CD8-positive, alpha-beta T cell (primary cell): ENCODE measurements at regions of chr20 and their contacts with region 1.

Region 1: GRCh38 chr20:33992923-33993575 is 662 bp upstream of the RALY start:
- DNase-seq: peak; percentile 98 to 100 (median 99)
- ATAC-seq: peak; percentile 84
- H3K4me3 ChIP-seq: peak overlapping the region; percentile 97 to 98
- H3K4me3 Mint-ChIP-seq: peak overlapping the region; percentile 98
- H3K27ac ChIP-seq: peak overlapping the region; percentile 86 to 94
- H3K27ac Mint-ChIP-seq: peak overlapping the region; percentile 98
- H3K4me1 ChIP-seq: peaks cover 41% of the 10 kb centered on the region
- H3K4me1 Mint-ChIP-seq: peaks cover 59% of the 10 kb centered on the region
- H3K27me3 ChIP-seq: no peaks in the 10 kb centered on the region
- H3K27me3 Mint-ChIP-seq: no peaks in the 10 kb centered on the region
- CTCF ChIP-seq: no peak

Region 2: GRCh38 chr20:33443512-33444239 is 549.4 kb before region 1 on chr20 and contains the start of gene SNTA1:
- CTCF ChIA-PET with region 1: no interaction called
- POLR2A ChIA-PET with region 1: no interaction called
- intact Hi-C with region 1: loop called (anchors 1 to 5 kb)
- DNase-seq: peak; percentile 67 to 90 (median 87)
- ATAC-seq: peak; percentile 69
- H3K4me3 ChIP-seq: peak within 1 kb of the TSS; percentile 85 to 97
- H3K4me3 Mint-ChIP-seq: peak within 1 kb of the TSS; percentile 94
- H3K27ac ChIP-seq: peak within 1 kb of the TSS; percentile 59 to 66
- H3K27ac Mint-ChIP-seq: peak within 1 kb of the TSS; percentile 92
- H3K4me1 ChIP-seq: peaks cover 16% of the 10 kb centered on the region
- H3K4me1 Mint-ChIP-seq: peaks cover 21% of the 10 kb centered on the region
- H3K27me3 ChIP-seq: no peaks in the 10 kb centered on the region
- H3K27me3 Mint-ChIP-seq: no peaks in the 10 kb centered on the region
- CTCF ChIP-seq: no peak
- total RNA-seq, gene SNTA1: 3.9 to 5.5 TPM

Region 3: DNA sequence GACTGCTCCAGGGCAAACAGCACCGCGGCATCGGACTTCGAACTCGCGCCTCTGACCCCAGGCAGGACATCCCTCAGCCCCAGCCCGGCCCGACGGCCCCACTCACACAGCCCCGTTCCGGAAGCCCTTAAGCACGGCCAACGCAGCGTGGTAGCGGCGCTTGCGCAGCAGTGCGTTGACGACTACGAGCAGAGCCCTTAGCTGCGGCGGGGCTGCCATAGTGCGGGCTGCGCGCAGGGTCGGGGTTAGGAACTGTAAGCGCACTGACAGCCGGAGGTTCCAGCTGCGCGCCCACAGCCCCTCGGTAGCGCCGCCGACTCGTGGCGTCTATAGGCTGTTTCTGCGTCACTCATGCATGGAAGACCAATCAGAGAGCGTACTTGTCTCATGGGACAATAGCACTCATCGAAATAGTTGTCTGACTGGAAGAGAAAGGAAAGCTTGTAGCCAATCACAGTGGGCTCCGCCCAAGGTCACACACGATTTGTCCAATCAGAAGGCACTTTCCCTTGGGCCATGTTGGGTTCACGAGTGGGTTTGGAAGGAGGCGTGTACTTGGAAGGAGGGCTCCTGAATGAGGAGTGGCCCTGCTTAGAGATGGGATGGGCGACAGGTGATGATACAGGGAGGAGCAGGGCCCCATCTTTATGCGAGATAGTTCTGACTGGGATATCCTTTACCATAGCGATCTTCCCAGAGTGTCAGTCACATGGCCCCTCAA is 272.9 kb before region 1 on chr20 and contains the start of gene PXMP4:
- CTCF ChIA-PET with region 1: no interaction called
- POLR2A ChIA-PET with region 1: no interaction called
- intact Hi-C with region 1: loop called in 1 of 2 experiments (anchors 1 kb)
- DNase-seq: peak; percentile 71 to 97 (median 84)
- ATAC-seq: peak; percentile 94
- H3K4me3 ChIP-seq: peak within 1 kb of the TSS; percentile 72 to 95
- H3K4me3 Mint-ChIP-seq: peak within 1 kb of the TSS; percentile 86
- H3K27ac ChIP-seq: peak within 1 kb of the TSS; percentile 68 to 78
- H3K27ac Mint-ChIP-seq: peak within 1 kb of the TSS; percentile 91
- H3K4me1 ChIP-seq: peaks cover 16% of the 10 kb centered on the region
- H3K4me1 Mint-ChIP-seq: peaks cover 29% of the 10 kb centered on the region
- H3K27me3 ChIP-seq: no peaks in the 10 kb centered on the region
- H3K27me3 Mint-ChIP-seq: no peaks in the 10 kb centered on the region
- CTCF ChIP-seq: no peak
- total RNA-seq, gene PXMP4: 2.7 to 2.8 TPM

Region 4: GRCh38 chr20:34058831-34059230 is 65.8 kb after region 1 on chr20:
- CTCF ChIA-PET with region 1: no interaction called
- POLR2A ChIA-PET with region 1: interaction called, 3 read pairs
- intact Hi-C with region 1: loop called in 1 of 2 experiments (anchors 5 kb)
- DNase-seq: peak in 5 of 9 experiments; percentile 15 to 81 (median 49)
- ATAC-seq: peak; percentile 89
- H3K4me3 ChIP-seq: no peak overlapping the region
- H3K4me3 Mint-ChIP-seq: no peak overlapping the region
- H3K27ac ChIP-seq: no peak overlapping the region
- H3K27ac Mint-ChIP-seq: peak overlapping the region; percentile 28
- H3K4me1 ChIP-seq: peaks cover 48% of the 10 kb centered on the region
- H3K4me1 Mint-ChIP-seq: peaks cover 90% of the 10 kb centered on the region
- H3K27me3 ChIP-seq: no peaks in the 10 kb centered on the region
- H3K27me3 Mint-ChIP-seq: no peaks in the 10 kb centered on the region
- CTCF ChIP-seq: no peak

Region 5: DNA sequence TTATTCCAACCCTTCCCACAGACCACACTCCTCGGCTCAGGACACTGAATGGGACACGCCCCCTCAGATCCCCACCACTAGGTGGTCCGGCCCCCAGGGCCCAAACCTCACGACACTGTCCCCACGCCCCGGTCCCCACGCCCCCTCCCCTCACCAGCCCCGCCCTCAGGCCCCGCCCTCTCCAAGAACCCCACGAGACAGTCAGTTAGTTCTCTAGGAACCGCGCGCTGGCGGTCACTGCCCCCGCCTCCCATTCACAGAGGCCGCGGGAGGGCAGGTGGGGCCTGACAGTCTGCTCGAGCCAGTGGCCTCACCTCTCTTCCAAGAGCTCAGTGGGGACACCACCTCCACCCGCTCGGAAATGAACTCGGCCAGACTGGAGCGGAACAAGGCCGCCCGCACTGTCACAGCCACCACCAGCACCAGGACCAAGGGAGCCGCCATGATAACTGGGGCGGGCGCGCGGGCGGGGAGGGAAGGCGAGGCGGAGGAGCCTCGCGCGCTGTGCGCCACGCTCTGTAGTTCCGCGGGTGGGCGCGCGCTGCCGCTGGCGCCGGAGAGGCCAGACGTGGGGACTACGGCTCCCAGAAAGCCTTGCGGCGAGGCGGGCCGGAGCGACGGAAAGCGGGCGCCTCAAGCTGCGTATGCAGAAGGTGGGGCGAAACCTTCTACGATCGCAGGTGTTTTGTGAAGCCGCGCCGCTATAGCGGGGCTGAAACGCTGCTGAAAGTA is 683.8 kb after region 1 on chr20 and contains the start of gene PIGU:
- CTCF ChIA-PET with region 1: no interaction called
- POLR2A ChIA-PET with region 1: no interaction called
- intact Hi-C with region 1: loop called in 1 of 2 experiments (anchors 10 kb)
- DNase-seq: peak; percentile 92 to 98 (median 96)
- ATAC-seq: peak; percentile 96
- H3K4me3 ChIP-seq: peak within 1 kb of the TSS; percentile 80 to 94
- H3K4me3 Mint-ChIP-seq: peak within 1 kb of the TSS; percentile 97
- H3K27ac ChIP-seq: peak within 1 kb of the TSS; percentile 83 to 90
- H3K27ac Mint-ChIP-seq: peak within 1 kb of the TSS; percentile 96
- H3K4me1 ChIP-seq: peaks cover 16% of the 10 kb centered on the region
- H3K4me1 Mint-ChIP-seq: peaks cover 22% of the 10 kb centered on the region
- H3K27me3 ChIP-seq: no peaks in the 10 kb centered on the region
- H3K27me3 Mint-ChIP-seq: no peaks in the 10 kb centered on the region
- CTCF ChIP-seq: no peak
- total RNA-seq, gene PIGU: 3.3 to 5.2 TPM

Region 6: DNA sequence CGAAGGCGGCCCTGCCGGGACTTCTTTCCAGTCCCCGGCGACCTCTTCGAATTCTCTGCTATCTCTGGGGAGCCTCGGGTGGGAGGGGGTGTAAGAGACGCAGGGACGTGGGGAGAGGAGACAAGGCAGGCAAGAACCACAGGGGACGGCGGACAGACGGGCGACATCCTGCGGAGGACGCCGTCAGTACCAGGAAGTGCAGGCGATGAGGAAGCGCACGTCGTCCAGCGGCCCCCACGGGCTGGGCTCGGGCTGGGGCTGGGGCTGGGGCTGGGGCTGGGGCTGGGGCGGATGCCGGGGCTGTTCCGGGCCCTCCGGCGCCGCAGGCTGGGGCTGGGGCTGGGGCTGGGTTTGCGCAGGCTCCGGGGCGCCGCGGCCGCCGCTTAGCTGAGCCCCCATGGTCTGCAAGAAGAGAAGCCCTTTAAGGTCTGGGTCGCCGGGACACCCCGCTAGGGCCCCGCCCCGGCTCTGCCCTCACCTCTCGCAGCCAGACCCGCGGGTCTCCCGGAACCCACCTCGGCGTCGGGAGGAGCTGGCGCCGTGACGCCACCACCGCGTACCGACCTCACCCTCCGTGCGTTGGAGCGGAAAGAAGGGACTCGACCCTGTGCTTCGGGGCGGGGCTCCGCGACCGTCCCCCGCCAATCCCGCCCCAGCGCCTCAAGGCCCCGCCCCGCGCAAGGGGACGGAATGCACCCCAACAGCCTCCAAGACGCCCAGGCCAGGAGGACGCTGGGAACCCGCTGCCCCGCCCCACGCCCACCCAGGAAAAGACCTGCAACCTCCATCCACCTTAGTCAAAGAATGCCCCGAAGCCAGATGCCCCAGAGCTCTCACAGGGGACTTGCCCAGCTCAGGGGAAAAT is 1284.7 kb after region 1 on chr20 and contains the start of gene MMP24OS:
- CTCF ChIA-PET with region 1: no interaction called
- POLR2A ChIA-PET with region 1: no interaction called
- intact Hi-C with region 1: loop called in 1 of 2 experiments (anchors 5 kb)
- DNase-seq: peak; percentile 78 to 96 (median 89)
- ATAC-seq: peak; percentile 88
- H3K4me3 ChIP-seq: peak within 1 kb of the TSS; percentile 81
- H3K4me3 Mint-ChIP-seq: peak within 1 kb of the TSS; percentile 96
- H3K27ac ChIP-seq: peak within 1 kb of the TSS; percentile 92 to 99
- H3K27ac Mint-ChIP-seq: peak within 1 kb of the TSS; percentile 99
- H3K4me1 ChIP-seq: peaks cover 14% of the 10 kb centered on the region
- H3K4me1 Mint-ChIP-seq: peaks cover 28% of the 10 kb centered on the region
- H3K27me3 ChIP-seq: no peaks in the 10 kb centered on the region
- H3K27me3 Mint-ChIP-seq: no peaks in the 10 kb centered on the region
- CTCF ChIP-seq: no peak
- total RNA-seq, gene MMP24OS: 64.5 to 67.1 TPM